ENCODE measurements at regions of chr20 and their contacts with region 1.

Region 1: DNA sequence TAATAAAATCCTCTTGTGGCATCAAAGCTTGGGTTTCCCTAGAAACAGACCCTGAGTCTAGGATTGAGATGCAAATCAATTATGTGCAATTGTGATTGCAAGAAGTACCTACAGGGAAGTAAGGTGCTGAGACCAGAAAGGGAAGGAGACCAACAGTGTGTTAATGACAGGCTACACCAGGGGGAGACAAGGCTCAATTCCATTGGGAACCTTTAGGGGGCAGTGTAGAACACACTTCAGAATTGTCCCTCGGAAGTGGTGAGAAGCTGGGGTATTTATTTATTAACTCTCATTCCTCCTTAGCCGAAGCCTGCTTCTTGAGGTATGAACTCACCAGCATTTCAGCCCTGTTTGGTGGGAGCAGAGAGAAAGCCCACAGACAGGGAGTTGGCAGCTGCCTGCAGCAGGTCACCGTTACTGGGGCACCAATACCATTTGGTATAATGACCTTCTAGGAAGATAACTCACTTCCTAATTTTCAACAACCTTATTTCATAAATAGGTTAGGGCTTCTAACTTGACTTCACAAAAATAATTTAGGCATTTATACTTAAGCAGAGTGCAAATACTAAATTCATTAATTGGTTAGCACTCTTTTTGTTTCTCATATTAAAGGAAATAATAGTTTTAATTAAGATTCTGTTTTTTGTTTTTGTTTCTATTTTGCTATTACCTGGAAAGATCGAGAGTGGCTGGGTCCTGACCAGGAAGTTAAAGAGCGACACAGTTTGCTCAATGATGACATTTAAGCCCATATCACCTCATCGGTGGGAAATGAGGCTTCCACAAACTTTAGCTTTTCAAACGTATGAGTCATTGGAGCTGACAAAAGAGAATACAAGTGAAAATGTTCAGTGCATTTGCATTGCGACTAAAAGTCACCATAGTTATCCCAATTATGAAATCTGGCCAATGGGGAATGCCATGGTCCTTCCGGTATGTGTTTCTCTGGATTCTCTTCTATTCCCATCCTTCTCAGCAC is 94.8 kb downstream of the BTBD3 start:
- H3K4me3 ChIP-seq: no peak overlapping the region; the same call in 1 of the 2 replicates
- H3K27ac ChIP-seq: no peak overlapping the region
- H3K4me1 ChIP-seq: no peaks in the 10 kb centered on the region
- CTCF ChIP-seq: 0 out of 2 replicates have a peak, but pooled peaks have one; percentile 35

Region 2: DNA sequence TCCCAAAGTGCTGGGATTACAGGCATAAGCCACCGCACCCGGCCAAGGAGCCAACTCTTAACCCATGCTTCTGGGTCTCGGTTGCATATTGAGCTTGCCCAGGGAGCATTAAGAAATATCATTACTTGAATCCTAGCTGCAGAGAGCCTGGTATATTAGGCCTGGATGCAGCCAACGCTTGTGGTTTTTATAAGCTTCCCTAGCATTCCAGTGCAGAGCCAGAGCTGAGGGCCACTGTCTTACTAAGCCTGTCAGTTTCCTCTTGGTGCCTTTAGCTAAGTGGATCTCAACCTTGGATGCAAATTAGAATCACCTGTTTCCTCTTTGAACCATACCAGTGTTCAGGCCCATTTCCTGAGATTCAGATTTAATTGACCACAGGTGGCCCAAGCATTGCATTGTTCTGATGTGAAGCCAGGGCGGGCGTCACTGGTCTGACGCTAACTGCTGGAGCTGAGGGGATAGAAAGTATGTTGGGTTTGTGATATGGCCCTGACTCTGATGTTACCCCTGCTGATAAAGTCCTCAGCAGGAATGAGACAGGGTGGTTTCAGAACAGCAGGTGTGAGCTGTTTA is 18.6 kb before region 1 on chr20:
- CTCF ChIA-PET with region 1: interaction called, 20 read pairs
- POLR2A ChIA-PET with region 1: no interaction called
- H3K4me3 ChIP-seq: no peak overlapping the region
- H3K27ac ChIP-seq: no peak overlapping the region
- H3K4me1 ChIP-seq: no peaks in the 10 kb centered on the region
- CTCF ChIP-seq: no peak

Region 3: DNA sequence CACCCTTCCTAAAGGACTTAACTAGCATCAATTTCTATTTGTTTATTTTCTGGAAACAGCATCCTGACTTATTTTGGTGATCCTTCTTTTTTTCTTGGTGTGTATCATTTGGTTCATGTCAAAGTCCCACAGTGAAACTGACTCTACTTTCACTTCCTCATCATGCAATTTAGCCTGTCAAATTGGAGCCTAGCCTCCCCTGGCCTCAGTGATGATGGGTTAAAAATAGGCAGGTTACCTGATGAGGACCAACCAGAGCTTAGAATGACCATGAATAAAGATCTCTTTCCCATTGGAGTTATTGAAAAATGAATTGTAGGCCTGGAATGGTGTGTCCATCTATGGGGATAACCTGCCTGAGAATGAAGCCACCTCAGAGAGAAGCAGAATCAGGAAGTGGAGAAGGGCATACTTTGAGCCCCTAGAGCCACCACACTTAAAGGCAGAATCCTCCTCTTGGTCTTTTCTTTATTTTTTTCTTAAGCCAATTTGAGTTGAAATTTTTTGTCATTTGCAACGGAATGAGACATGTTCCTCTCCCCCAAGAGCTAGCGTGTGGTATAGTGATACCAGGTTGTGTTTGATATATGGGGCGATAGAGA is 10.8 kb after region 1 on chr20:
- CTCF ChIA-PET with region 1: interaction called, 14 read pairs
- POLR2A ChIA-PET with region 1: no interaction called
- H3K4me3 ChIP-seq: no peak overlapping the region
- H3K27ac ChIP-seq: no peak overlapping the region
- H3K4me1 ChIP-seq: no peaks in the 10 kb centered on the region
- CTCF ChIP-seq: no peak